ENCODE measurements at regions of chr4 and their contacts with region 1.

Region 1: GRCh38 chr4:138078751-138079520 is 163.2 kb downstream of the SLC7A11 start:
- DNase-seq: no peak
- H3K4me3 ChIP-seq: no peak overlapping the region
- H3K27ac ChIP-seq: no peak overlapping the region
- H3K27me3 ChIP-seq: no peaks in the 10 kb centered on the region
- CTCF ChIP-seq: no peak

Region 2: DNA sequence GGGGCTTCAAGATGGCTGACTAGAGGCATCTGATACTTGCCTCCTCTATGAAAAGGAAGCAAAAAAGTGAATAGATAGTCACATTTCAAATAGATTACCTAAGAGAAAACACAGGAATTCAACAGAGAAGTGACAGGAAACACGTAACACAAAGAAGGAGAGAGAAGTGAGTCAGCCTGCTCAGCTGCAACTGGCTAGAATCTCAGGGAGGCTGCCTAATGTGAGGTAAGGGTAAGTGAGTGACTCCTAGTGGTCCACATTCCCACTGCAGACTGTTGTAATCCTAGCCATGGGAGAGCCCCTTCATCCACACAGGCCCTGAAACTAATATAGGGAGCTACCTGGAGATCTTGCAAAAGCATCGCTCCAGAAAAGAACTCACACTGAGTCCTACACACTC is 16.0 kb before region 1 on chr4:
- CTCF ChIA-PET with region 1: interaction called, 3 read pairs
- POLR2A ChIA-PET with region 1: interaction called, 10 read pairs
- DNase-seq: peak; percentile 46
- H3K4me3 ChIP-seq: no peak overlapping the region
- H3K27ac ChIP-seq: peak overlapping the region; percentile 12
- H3K27me3 ChIP-seq: no peaks in the 10 kb centered on the region
- CTCF ChIP-seq: peak; percentile 50

Region 3: GRCh38 chr4:138259801-138260200 is 180.9 kb after region 1 on chr4:
- CTCF ChIA-PET with region 1: no interaction called
- POLR2A ChIA-PET with region 1: no interaction called
- DNase-seq: no peak
- H3K4me3 ChIP-seq: no peak overlapping the region
- H3K27ac ChIP-seq: no peak overlapping the region
- H3K27me3 ChIP-seq: no peaks in the 10 kb centered on the region
- CTCF ChIP-seq: no peak

Measured in AG04450 (cell line).